GM10248 (cell line): ENCODE measurements at regions of chr14 and their contacts with region 1.

Region 1: DNA sequence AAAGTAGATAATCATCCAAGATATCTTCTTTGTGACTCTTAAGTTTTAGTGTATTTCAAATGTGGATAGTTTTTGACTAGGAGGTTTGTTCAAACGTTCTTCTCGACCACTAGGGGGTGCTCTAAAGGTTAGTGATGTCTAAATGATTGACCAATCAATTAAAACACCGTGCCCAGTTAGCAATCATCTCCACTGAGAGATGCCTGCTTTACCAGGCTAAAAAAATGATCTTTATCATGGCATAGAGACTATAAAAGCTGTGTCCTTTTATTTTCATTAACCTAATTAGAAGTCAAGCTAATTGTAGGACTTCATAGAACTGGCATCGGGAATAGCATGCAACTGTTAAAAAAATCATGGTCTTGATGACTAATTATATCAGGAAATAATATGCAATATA is 153.9 kb downstream of the PRKCH start:
- DNase-seq: peak; percentile 52
- CTCF ChIP-seq: peak; percentile 39

Region 2: GRCh38 chr14:60599727-60600126 is 875.6 kb before region 1 on chr14:
- CTCF ChIA-PET with region 1: no interaction called
- POLR2A ChIA-PET with region 1: no interaction called
- DNase-seq: no peak
- CTCF ChIP-seq: no peak

Region 3: DNA sequence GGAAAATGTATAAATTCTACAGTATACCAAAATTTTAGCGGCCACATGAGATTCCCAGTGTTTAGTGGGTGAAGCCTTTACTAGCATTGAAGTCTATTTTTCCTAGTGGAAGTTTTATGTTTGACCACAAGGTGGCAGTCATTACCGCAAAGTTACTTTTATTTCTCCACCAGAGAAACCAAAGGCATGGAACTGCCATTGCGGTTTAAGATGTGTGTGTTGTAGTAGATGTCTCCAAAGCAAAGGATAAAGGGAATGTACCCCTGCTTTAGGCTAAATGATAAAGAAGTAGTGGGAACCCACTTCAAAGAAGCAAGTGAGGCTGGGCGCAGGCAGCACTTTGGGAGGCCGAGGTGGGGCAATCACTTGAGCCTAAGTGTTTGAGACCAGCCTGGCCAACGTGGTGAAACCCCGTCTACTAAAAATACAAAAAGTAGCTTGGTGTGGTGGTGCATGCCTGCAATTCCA is 13.5 kb before region 1 on chr14:
- CTCF ChIA-PET with region 1: interaction called, 23 read pairs
- POLR2A ChIA-PET with region 1: no interaction called
- DNase-seq: peak; percentile 55
- CTCF ChIP-seq: peak; percentile 35

Region 4: GRCh38 chr14:61493239-61493638 is 17.9 kb after region 1 on chr14:
- CTCF ChIA-PET with region 1: interaction called, 24 read pairs
- POLR2A ChIA-PET with region 1: no interaction called
- DNase-seq: no peak
- CTCF ChIP-seq: no peak

Region 5: DNA sequence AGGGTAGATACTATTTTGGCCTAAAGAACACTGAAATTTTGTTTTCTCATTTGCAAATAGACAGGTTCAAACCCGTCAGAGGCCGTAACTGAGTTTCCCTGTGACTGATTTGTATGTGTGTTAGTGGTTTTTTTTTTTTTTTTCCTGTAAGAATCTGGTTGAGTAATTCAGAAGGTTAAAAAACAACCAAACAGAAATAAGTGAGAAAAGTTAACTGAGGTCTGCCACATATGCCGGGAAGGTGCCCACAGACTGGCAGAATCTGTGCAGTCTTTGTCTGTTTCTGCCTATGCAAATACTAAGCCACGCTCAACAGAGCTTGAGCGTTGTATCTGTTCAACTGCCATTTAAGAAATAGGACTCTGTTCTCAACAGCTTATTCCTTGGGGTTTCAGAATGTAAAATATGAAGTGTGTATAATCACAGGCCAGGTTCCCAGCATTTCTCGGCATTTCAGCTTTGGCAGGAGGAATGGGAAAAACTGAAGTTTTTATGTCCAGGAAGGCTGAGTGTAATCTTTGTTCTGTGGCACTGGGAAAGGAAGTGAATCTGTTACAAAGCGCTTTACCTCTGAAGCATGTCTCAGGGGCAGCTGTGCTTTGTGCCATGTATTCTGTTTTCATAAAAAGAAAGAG is 28.0 kb after region 1 on chr14:
- CTCF ChIA-PET with region 1: interaction called, 18 read pairs
- POLR2A ChIA-PET with region 1: no interaction called
- DNase-seq: no peak
- CTCF ChIP-seq: no peak

Region 6: DNA sequence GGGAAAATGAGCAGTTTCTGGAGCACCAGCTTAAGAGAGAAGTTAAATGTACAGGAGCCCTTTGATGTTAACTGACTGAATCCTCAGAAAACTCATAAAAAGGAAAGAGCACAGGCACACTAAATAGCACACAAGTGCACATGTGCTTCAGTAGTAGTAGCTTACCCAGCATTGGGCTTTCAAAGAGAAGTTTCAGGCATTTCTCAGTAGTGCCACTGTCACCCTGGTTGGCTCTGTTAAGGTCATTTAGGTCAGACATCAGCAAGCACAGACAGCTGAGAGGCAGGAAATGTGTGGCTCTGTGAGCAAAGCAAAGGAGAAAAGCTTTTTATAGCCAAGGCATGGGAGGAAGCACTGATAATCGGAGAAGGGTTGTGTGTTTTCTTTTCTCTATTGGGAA is 123.7 kb after region 1 on chr14:
- CTCF ChIA-PET with region 1: no interaction called
- POLR2A ChIA-PET with region 1: no interaction called
- DNase-seq: no peak
- CTCF ChIP-seq: no peak